Vagina (tissue), 2 donors: ENCODE measurements at regions of chr16 and their contacts with region 1.

Region 1: DNA sequence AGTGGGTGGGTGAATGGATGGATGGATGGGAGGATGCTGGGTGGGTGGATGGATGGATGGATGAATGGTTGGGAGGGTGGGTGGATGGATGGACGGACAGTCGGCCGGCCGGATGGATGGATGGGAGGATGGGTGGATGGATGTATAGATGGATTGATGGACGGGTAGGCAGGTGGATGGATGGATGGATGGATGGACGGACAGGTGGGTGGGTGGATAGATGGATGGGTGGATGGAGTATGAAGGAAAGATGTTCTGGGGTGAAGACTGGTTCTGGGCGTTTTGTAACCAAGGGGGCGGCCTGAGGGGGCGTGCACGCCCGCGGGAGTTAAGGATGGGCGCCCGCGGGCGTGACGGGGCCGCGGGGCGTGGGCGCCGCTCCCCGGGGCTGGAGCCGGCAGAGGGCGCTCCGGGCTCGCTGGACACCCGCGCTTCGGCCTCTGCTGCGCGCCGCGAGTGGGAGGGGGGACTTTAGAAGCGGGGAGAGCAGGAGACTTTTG is at the start of gene NECAB2:
- DNase-seq: no peak
- H3K4me3 ChIP-seq: peak within 1 kb of the TSS in 1 of 2 donors; percentile 39
- H3K27ac ChIP-seq: no peak within 1 kb of the TSS
- H3K4me1 ChIP-seq: no peaks in the 10 kb centered on the region
- H3K27me3 ChIP-seq: no peaks in the 10 kb centered on the region
- CTCF ChIP-seq: peak in 1 of 3 experiments; percentile 58
- POLR2A ChIP-seq: no peak
- total RNA-seq, gene NECAB2: not detected

Region 2: DNA sequence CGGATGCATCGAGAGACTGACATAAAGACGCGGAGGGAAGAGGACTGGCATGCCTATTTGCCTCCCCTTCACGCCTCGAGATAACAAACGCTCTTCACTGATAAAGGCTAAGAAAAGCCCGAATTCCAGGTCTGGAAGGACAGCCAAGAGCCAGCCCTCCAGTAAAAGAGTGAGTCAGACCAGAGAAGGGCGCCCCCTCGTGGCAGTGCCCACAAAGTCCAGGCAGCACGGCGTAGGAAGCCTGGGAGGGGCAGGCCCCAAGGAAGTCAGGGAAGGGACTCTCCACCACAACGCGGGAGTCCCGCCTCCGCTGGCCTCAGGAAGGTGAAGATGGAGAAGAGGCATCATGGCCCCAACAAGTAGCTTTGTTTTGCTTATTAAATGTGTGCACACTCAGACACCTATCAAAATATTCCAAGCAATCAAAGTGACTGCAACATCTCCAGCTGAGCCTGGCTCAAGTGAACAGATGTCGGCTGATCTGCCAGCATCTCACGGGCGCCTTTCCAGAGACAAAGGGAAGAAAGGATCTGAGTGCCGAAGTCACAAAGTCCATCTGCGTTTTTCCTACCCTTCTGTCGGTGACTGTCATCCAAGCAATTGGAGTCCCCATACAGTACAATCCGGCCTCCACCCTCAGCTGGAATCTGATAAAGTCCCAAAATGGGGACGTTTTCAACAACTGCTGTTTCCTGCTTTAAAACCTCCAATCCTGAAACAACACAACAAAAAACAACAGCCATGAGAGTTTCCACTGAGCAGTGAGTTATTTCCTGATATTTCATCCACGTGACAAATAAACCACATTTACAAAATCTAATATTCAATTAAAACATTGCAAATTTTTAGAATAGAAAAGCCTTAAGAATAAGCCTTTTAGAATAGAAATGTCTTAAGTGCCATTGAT is 95.1 kb after region 1 on chr16:
- intact Hi-C with region 1: loop called (anchors 10 kb)
- DNase-seq: no peak
- H3K4me3 ChIP-seq: no peak overlapping the region
- H3K27ac ChIP-seq: no peak overlapping the region
- H3K4me1 ChIP-seq: no peaks in the 10 kb centered on the region
- H3K27me3 ChIP-seq: no peaks in the 10 kb centered on the region
- CTCF ChIP-seq: peak; percentile 41 to 69 (median 56)
- POLR2A ChIP-seq: no peak

Region 3: DNA sequence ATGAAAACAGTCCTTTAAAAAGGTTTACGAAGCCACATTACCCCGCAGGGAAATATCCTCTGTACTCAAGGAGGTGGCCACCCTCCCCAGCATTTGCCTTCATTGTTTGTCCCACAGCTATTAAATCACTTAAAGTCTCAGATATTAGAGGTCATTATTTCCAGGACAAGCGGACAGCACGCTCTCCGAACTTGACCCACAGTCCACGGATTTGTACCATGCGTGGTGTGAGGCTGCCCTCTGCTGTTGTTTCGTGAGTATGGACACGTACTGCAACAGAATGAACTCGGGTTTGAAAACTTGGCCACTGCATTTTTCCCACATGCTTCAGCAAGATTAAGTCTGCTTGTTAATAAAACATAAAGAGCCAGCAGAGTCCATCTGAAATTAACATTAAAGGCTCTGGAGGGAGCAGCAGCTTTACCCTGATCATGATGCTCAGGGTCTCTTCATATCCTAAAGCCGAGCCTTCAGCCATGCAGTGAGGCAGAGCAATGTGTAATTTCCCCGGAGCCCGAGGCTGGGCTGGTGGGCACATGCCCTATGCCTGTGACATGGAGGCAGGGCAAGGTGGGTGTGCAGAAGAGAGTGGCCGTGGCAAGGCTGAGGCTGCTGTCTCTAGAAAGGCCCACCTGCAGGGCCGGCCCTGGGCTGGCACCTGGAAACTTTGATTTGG is 516.9 kb after region 1 on chr16:
- intact Hi-C with region 1: loop called (anchors 10 kb)
- DNase-seq: peak; percentile 52 to 62
- H3K4me3 ChIP-seq: no peak overlapping the region
- H3K27ac ChIP-seq: no peak overlapping the region
- H3K4me1 ChIP-seq: peaks cover 4% of the 10 kb centered on the region
- H3K27me3 ChIP-seq: no peaks in the 10 kb centered on the region
- CTCF ChIP-seq: peak; percentile 59 to 78 (median 60)
- POLR2A ChIP-seq: no peak